SK-N-SH (cell line): ENCODE measurements at regions of chr2 and their contacts with region 1.

Region 1: DNA sequence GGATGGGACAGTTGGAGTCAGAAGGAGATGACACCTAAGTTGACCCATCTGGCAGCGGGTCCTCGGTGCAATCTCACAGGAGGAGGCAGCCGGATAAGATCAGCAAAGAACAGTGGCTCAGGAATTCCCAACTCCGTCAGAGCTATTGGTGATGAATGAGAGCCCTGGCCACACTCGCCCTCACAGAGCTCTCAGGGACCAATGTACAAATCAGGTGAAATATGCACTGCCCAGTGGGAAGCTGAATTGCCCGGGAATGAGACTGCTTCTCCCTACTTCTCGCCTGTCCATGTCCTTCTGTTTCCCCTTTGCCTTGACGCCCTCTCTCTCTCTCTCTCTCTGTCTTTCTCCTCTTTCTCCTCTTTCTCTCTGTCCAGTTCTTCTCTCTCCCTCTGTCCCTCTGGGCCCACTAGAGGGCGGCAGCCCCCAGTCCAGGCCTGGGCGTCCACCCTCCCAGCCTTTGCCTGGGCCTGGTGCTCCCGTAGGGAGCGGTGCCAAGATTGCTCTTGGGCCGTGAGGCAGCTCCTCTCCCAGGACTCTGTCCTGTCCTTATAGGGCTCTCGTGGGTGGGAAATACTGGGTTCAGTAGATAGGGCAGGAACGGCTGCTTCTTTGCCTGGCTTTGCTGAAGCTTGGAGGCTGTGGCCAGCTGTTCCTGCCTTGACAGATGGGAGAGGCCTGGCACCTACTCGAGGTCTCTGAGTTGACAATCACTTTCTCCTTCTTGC is 28.3 kb upstream of the PUM2 start:
- DNase-seq: peak; percentile 93
- H3K4me3 ChIP-seq: no peak overlapping the region
- H3K27ac ChIP-seq: peak overlapping the region in 1 of 2 experiments; percentile 11; a peak in 1 of 4 replicates
- H3K4me1 ChIP-seq: peaks cover 0 to 16% of the 10 kb centered on the region in 2 experiments; a peak in 1 of 4 replicates
- H3K27me3 ChIP-seq: no peaks in the 10 kb centered on the region; the same call in 1 of the 2 replicates
- CTCF ChIP-seq: peak; percentile 97
- EP300 ChIP-seq: no peak
- RAD21 ChIP-seq: peak; percentile 95

Region 2: DNA sequence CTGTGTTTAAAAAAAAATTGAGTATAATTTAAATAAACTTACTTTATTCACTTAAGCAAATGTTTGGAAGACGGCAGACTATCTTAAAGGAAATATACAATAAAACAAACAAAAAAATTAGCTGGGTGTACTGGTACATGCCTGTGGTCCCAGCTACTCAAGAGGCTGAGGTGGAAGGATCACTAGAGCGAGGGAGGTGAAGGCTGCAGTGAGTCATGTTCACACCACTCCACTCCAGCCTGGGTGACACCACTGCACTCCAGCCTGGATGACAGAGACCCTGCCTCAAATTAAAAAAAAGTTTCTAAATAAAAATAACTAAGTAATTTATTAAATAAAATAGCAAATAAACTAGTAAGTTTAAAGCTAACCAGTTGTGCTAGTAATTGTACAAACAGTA is 35.8 kb before region 1 on chr2:
- CTCF ChIA-PET with region 1: interaction called, 15 read pairs
- POLR2A ChIA-PET with region 1: no interaction called
- DNase-seq: no peak
- H3K4me3 ChIP-seq: no peak overlapping the region
- H3K27ac ChIP-seq: no peak overlapping the region
- H3K4me1 ChIP-seq: peaks cover 0 to 10% of the 10 kb centered on the region in 2 experiments; a peak in 2 of 4 replicates
- H3K27me3 ChIP-seq: no peaks in the 10 kb centered on the region
- CTCF ChIP-seq: no peak
- EP300 ChIP-seq: no peak
- RAD21 ChIP-seq: no peak

Region 3: DNA sequence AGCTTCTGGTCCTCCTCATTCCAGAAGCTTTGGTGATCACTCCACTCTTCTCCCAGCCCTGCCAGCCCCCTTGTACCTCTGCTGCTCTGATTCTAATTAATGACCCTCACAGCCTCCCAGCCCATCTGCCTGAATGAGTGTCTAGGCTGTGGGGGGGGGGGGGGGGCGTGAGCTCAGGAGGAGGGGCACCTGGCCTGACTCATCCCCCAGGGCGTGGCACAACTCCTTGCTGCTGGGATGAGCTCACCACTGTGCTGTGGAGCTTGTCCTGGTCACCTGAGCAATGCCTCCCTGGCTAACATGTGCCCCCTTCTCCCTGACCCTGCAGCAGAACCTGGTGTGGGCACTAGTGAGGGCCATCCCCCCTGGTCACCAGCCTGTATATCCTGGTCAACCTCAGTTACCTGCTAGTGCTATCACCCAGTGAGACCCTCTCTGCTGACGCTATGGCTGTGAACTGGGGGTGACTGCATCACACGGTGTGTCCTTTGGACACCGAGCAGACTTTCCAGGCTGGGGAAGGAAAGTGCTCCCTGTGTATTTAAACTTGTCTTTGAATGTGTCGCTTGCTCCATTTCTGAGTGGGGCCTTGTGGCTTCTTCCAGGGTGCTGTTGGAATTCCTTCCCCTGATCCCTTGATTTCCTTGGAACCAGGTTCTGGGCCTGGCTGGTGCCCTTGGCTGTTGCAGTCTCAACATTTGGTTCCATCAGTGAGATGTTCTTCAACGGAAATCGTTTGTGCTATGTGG is 13.2 kb after region 1 on chr2:
- CTCF ChIA-PET with region 1: interaction called, 31 read pairs
- POLR2A ChIA-PET with region 1: no interaction called
- DNase-seq: no peak
- H3K4me3 ChIP-seq: no peak overlapping the region
- H3K27ac ChIP-seq: no peak overlapping the region
- H3K4me1 ChIP-seq: peaks cover 0 to 26% of the 10 kb centered on the region in 2 experiments; a peak in 2 of 4 replicates
- H3K27me3 ChIP-seq: peaks cover 9% of the 10 kb centered on the region; the same call in 1 of the 2 replicates
- CTCF ChIP-seq: no peak
- EP300 ChIP-seq: no peak
- RAD21 ChIP-seq: no peak

Region 4: DNA sequence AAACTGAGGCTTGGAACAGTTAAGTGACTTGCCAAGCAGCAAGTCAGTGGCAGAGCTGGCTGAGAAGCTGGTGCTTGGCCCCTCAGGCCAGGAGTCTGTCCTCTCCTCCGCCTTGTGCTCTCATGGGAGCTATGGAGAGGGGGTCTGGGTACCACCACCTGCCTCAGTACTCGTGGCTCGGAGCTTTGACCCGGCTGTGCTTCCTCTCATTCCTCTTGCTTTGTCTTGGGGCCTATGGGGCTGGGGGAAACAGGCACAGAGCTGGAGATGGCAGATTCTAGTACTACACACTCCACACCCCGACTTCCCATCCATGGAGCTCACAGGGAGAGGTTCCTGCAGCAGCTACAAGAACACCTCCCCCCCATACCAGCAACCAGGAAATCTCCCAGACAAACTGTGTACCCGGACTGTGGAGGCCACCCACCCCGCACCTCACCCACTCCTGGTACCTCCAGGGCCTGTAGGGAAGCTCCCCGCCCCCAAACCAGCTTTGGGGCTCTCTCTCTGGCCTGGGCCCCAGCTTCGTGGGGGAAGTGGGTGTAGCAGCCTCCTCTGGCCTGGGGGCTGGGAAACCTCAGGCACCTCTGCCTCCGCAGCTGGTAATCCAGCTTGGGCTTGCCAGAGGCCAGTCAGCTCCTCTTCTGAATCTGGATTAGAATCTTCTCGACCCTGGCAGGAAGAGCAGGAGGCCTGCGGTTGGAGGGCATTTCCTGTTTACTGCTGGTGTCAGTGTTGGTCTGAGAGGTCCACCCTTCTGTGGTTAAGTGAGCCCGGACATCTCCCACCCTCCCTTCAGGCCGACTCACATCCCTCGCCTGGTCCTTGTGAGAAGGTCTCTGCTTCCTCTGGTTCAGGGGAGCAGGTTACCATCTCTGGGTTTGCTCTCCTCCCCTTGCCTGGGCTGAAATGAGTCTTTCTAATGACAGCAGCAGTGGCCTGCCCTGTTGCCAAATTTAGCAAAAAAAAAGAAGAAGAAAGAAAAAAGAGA is 45.6 kb after region 1 on chr2:
- CTCF ChIA-PET with region 1: interaction called, 87 read pairs
- POLR2A ChIA-PET with region 1: interaction called, 3 read pairs
- DNase-seq: peak; percentile 57
- H3K4me3 ChIP-seq: 0 out of 4 replicates have a peak overlapping the region, but pooled peaks of 1 of the 2 experiments have one; percentile 3
- H3K27ac ChIP-seq: peak overlapping the region; percentile 3 to 57; a peak in 3 of 4 replicates
- H3K4me1 ChIP-seq: peaks cover 25 to 32% of the 10 kb centered on the region in 2 experiments
- H3K27me3 ChIP-seq: no peaks in the 10 kb centered on the region
- CTCF ChIP-seq: no peak
- EP300 ChIP-seq: peak; percentile 35 to 78; a peak in 3 of 4 replicates
- RAD21 ChIP-seq: no peak

Region 5: DNA sequence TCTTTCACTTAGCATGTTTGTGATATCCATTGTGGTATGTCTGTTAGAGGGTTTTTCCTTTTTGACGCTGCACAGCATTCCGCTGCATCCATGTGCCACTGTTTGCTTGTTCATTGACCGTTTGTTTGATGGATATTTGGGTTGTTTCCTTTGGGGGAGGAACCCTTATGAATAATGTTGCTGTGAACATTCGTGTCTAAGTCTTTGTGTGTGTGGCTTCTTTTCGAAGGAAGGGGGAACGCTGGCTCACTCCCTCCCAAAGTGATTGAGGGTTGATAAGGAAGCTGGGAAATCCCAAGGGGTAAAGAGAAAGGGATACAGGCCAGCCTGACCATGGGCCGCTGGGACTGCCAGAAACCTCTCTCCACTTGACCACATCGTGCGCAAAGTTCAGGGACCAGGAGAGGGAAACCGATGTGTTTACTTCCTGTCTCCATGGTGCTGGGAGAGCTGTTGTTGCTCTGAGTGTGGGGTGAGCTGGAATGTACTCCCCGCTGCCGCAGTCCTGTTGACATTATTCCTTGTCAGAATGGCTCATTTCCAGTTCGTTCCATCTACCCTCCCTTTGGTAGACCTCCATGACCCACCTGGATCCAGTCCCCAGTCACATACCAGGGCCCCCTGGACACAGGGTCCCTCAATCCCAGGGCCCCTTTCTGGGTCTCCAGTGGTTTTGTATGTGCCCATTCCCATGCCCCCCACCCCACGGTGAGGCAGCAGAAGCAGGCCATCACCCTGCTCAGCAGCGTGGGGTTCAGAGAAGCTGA is 232.3 kb after region 1 on chr2:
- CTCF ChIA-PET with region 1: interaction called, 10 read pairs
- POLR2A ChIA-PET with region 1: no interaction called
- DNase-seq: no peak
- H3K4me3 ChIP-seq: no peak overlapping the region
- H3K27ac ChIP-seq: no peak overlapping the region
- H3K4me1 ChIP-seq: peaks cover 5 to 25% of the 10 kb centered on the region in 2 experiments; a peak in 1 of 4 replicates
- H3K27me3 ChIP-seq: no peaks in the 10 kb centered on the region
- CTCF ChIP-seq: no peak
- EP300 ChIP-seq: no peak
- RAD21 ChIP-seq: no peak

Region 6: GRCh38 chr2:20635675-20636584 is 257.0 kb after region 1 on chr2:
- CTCF ChIA-PET with region 1: interaction called, 151 read pairs
- POLR2A ChIA-PET with region 1: no interaction called
- DNase-seq: peak; percentile 98
- H3K4me3 ChIP-seq: peak overlapping the region in 1 of 2 experiments; percentile 27; a peak in 1 of 4 replicates
- H3K27ac ChIP-seq: peak overlapping the region; percentile 9 to 72; a peak in 3 of 4 replicates
- H3K4me1 ChIP-seq: peaks cover 16 to 21% of the 10 kb centered on the region in 2 experiments
- H3K27me3 ChIP-seq: no peaks in the 10 kb centered on the region
- CTCF ChIP-seq: peak; percentile 98
- EP300 ChIP-seq: peak in 1 of 2 experiments; percentile 37; a peak in 2 of 4 replicates
- RAD21 ChIP-seq: peak; percentile 100

Region 7: DNA sequence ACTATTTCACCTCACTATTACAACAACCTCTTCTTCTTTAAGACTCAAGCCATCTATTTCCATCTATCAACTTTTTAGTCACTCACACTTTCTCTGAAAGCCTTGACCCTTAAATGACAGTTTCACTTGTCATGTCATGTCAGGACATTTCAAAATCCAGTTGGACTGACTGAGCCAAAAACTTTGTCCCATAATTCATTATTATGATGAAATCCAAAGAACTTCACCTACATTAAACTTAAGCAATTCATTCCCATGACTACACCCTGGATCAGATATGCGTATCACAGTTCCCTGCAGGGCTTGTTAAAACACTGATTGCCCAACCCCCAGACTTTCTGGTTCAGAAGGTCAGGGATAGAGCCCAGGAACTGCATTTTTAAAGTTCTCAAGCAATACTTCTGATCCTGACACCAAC is 417.4 kb after region 1 on chr2:
- CTCF ChIA-PET with region 1: no interaction called
- POLR2A ChIA-PET with region 1: no interaction called
- DNase-seq: no peak
- H3K4me3 ChIP-seq: no peak overlapping the region
- H3K27ac ChIP-seq: no peak overlapping the region
- H3K4me1 ChIP-seq: no peaks in the 10 kb centered on the region
- H3K27me3 ChIP-seq: no peaks in the 10 kb centered on the region
- CTCF ChIP-seq: no peak
- EP300 ChIP-seq: no peak
- RAD21 ChIP-seq: no peak